BJ (cell line): ENCODE measurements at regions of chr5 and their contacts with region 1.

Region 1: GRCh38 chr5:147558826-147559225 is 49.0 kb upstream of the DPYSL3 start:
- DNase-seq: no peak
- H3K4me3 ChIP-seq: no peak overlapping the region
- H3K27me3 ChIP-seq: no peaks in the 10 kb centered on the region
- CTCF ChIP-seq: peak; percentile 79

Region 2: DNA sequence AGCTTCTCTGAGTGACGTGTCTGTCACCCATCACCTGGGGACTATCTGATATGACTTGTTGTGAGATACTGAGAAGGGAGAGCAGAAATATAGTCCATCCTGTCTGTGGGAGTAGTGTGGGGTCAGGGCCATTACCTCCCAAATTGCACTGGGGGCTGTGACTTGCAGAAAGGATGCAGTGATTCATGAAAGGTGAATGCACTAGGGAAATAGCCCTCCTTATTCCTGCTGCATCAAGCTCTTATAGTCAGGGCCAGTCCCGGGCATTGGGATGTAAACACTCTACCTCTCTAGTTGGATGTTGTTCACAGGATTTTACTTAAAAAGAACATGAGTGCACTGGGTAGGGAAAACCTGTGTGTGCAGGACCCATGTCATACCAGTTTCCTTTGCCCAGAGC is 199.2 kb before region 1 on chr5:
- CTCF ChIA-PET with region 1: no interaction called
- POLR2A ChIA-PET with region 1: no interaction called
- DNase-seq: no peak
- H3K4me3 ChIP-seq: no peak overlapping the region
- H3K27me3 ChIP-seq: no peaks in the 10 kb centered on the region; the same call in 1 of the 2 replicates
- CTCF ChIP-seq: no peak

Region 3: GRCh38 chr5:147382776-147383175 is 176.1 kb before region 1 on chr5:
- CTCF ChIA-PET with region 1: interaction called, 12 read pairs
- POLR2A ChIA-PET with region 1: no interaction called
- DNase-seq: no peak
- H3K4me3 ChIP-seq: peak overlapping the region; percentile 48
- H3K27me3 ChIP-seq: no peaks in the 10 kb centered on the region
- CTCF ChIP-seq: no peak

Region 4: GRCh38 chr5:147453875-147454814 is 104.7 kb before region 1 on chr5:
- CTCF ChIA-PET with region 1: interaction called, 29 read pairs
- POLR2A ChIA-PET with region 1: no interaction called
- DNase-seq: no peak
- H3K4me3 ChIP-seq: peak overlapping the region; percentile 89
- H3K27me3 ChIP-seq: peaks cover 2% of the 10 kb centered on the region
- CTCF ChIP-seq: peak; percentile 93

Region 5: DNA sequence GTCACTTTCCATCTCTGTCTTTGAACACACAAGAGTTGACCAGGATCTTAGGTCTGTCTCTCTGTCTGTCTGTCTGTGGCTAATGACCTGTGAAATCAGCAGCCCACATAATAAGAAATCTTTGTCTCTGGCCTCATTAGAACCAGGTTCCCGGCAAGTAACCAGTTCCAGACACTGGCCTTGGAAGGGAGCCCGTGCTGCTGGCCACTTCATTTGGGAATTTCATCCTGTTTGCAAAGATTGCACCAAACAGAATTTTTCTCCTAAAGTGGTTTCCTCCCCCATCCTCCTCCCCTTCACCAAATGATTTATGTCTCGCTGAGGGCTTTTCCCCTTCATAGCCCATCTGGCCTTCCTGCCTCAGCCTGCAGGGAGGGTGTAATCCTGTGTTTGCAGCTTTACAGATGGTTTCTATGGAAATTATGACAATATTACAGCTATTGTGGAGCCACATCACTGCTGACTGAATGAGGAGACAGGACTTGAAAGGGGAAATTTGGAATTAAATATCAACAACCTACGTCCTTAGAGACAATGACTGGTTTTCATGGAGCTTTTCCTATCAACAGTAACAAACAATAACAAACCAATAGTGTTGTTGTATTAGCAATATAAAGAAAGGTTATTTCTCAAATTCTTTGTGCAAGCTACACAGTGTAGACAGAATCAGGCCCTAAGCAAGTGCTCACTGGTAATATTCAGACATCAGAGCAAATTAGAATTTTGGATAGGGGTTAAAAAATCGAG is 74.7 kb before region 1 on chr5:
- CTCF ChIA-PET with region 1: interaction called, 26 read pairs
- POLR2A ChIA-PET with region 1: no interaction called
- DNase-seq: peak; percentile 98
- H3K4me3 ChIP-seq: no peak overlapping the region
- H3K27me3 ChIP-seq: no peaks in the 10 kb centered on the region
- CTCF ChIP-seq: no peak

Region 6: GRCh38 chr5:147520450-147520849 is 38.4 kb before region 1 on chr5:
- CTCF ChIA-PET with region 1: no interaction called
- POLR2A ChIA-PET with region 1: no interaction called
- DNase-seq: no peak
- H3K4me3 ChIP-seq: no peak overlapping the region
- H3K27me3 ChIP-seq: no peaks in the 10 kb centered on the region
- CTCF ChIP-seq: no peak